HEK293 (cell line): ENCODE measurements at regions of chr11 and their contacts with region 1.

Region 1: GRCh38 chr11:1572197-1573076 is at the start of gene DUSP8:
- H3K4me3 ChIP-seq: peak within 1 kb of the TSS; percentile 75
- H3K27ac ChIP-seq: peak within 1 kb of the TSS; percentile 53; the same call in 1 of the 2 replicates
- H3K4me1 ChIP-seq: no peaks in the 10 kb centered on the region; the same call in 1 of the 2 replicates
- CTCF ChIP-seq: no peak

Region 2: GRCh38 chr11:1536065-1536843 is 36.2 kb before region 1 on chr11:
- CTCF ChIA-PET with region 1: interaction called, 11 read pairs
- POLR2A ChIA-PET with region 1: interaction called, 3 read pairs
- H3K4me3 ChIP-seq: no peak overlapping the region
- H3K27ac ChIP-seq: no peak overlapping the region
- H3K4me1 ChIP-seq: no peaks in the 10 kb centered on the region
- CTCF ChIP-seq: no peak

Region 3: DNA sequence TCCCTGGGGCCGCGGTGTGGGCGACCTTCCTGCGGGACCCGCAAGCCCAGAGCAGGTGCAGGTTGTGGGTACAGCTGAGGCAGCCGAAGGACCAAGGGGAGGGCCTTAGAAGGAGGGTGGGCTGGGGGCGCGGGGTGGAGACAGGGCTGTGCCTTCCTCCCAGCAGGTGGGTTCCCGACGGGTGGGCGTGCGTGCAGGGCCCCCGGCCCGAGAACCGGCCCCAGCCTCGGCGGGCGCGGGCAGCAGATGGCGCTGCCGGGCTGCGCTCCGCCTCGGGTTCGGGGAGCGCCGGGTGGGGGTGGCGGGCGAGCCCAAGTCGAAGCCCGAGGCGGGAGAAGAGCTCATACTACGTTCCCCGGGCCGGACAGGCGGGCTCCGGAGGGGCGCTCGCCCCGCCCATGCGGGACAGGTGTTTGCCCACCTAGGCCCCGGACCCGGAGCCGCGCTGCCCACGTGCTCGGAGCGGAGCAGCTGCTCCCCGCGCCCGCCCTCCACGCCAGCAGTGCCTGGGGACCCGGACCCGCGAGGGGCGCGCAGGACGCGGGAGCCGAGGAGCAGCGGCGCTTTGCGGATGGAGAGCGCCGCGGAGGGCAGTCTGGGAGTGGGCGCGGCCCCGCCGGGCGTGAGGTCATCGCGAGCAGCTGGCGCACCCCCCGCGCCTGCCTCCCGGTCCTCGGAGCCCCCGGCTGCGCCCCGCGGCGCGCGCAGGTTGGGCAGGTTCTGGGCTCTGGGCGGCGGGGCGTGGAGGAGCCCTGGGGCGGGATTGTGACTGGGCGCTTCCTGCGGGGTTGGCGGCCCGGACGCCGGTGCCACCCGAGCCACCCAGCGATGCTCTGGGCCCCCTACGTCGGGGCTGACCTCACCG is 25.7 kb before region 1 on chr11:
- CTCF ChIA-PET with region 1: interaction called, 138 read pairs
- POLR2A ChIA-PET with region 1: interaction called, 24 read pairs
- H3K4me3 ChIP-seq: peak overlapping the region; percentile 36
- H3K27ac ChIP-seq: no peak overlapping the region
- H3K4me1 ChIP-seq: peaks cover 3% of the 10 kb centered on the region; the same call in 1 of the 2 replicates
- CTCF ChIP-seq: peak; percentile 46; the same call in 1 of the 2 replicates

Region 4: DNA sequence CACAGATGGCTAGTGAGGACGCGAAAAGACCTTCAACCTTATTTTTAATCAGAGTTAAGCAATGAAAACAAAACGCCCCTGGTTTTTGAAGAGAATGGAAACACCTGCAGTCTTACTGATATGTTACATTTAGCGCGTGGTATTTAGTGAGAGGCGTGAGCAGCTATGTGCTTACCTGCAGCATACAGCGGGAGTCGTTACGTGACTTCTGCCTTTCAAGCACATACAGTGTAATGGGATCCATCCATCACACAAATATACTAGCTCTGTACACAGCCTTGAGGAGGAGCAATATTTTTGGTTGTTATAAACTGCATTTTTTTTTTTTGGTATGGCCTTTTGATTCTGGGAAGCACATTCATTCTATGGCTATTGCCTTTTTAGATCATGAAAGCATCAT is 20.2 kb after region 1 on chr11:
- CTCF ChIA-PET with region 1: interaction called, 22 read pairs
- POLR2A ChIA-PET with region 1: no interaction called
- H3K4me3 ChIP-seq: no peak overlapping the region
- H3K27ac ChIP-seq: no peak overlapping the region
- H3K4me1 ChIP-seq: no peaks in the 10 kb centered on the region
- CTCF ChIP-seq: no peak